ENCODE measurements at regions of chr4 and their contacts with region 1.

Region 1: DNA sequence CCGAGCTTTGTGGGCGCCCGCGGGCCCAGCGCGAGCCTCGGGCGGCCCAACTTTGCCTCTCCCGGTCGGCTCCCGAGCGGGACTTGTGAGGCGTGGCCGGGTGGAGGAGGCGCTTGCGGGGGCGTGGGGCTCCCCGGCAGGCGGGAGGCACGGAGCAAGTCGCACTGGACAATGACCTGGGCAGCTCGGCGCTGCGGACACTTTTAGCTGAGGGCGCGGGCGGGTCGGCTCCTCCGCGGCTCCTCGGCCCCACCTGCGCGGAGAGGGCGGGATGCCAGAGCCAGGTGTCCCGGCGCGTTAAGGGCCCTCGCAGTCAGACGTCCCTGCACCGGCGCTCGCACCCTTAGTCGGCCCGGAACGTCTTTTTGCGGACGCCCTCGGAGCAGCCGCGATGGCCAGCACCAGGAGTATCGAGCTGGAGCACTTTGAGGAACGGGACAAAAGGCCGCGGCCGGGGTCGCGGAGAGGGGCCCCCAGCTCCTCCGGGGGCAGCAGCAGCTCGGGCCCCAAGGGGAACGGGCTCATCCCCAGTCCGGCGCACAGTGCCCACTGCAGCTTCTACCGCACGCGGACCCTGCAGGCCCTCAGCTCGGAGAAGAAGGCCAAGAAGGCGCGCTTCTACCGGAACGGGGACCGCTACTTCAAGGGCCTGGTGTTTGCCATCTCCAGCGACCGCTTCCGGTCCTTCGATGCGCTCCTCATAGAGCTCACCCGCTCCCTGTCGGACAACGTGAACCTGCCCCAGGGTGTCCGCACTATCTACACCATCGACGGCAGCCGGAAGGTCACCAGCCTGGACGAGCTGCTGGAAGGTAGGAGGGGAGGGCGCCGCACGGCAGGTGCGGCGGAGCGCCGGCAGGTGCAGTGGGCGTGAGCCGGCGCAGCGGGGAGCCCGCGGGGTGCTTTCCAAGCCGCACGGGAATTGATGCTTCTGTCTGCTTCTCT is 664 bp downstream of the DCLK2 start:
- H3K4me3 Mint-ChIP-seq: peak overlapping the region; percentile 73
- H3K27ac Mint-ChIP-seq: no peak overlapping the region
- H3K4me1 Mint-ChIP-seq: peaks cover 19% of the 10 kb centered on the region
- H3K27me3 Mint-ChIP-seq: peaks cover 53% of the 10 kb centered on the region

Region 2: GRCh38 chr4:150098214-150098613 is 19.3 kb after region 1 on chr4:
- intact Hi-C with region 1: no loop called
- H3K4me3 Mint-ChIP-seq: no peak overlapping the region
- H3K27ac Mint-ChIP-seq: no peak overlapping the region
- H3K4me1 Mint-ChIP-seq: no peaks in the 10 kb centered on the region
- H3K27me3 Mint-ChIP-seq: no peaks in the 10 kb centered on the region

Region 3: GRCh38 chr4:150126201-150126863 is 47.4 kb after region 1 on chr4:
- intact Hi-C with region 1: loop called (anchors 5 kb)
- H3K4me3 Mint-ChIP-seq: no peak overlapping the region
- H3K27ac Mint-ChIP-seq: no peak overlapping the region
- H3K4me1 Mint-ChIP-seq: peaks cover 8% of the 10 kb centered on the region
- H3K27me3 Mint-ChIP-seq: peaks cover 3% of the 10 kb centered on the region

Measured in dendritic cell treated with granulocyte-macrophage colony-stimulating factor and Interleukin-4, amounts not matched to agents 40 ng/mL and 50 ng/mL, for 4 days (primary cell).